ENCODE measurements at regions of chr2 and their contacts with region 1.

Region 1: GRCh38 chr2:241355983-241356870 is at the start of gene FARP2:
- DNase-seq: peak; percentile 95 to 100 (median 97)
- ATAC-seq: peak; percentile 94
- H3K4me3 ChIP-seq: peak within 1 kb of the TSS; percentile 55
- H3K4me3 Mint-ChIP-seq: peak within 1 kb of the TSS; percentile 86
- H3K27ac ChIP-seq: peak within 1 kb of the TSS in 1 of 2 donors; percentile 20
- H3K27ac Mint-ChIP-seq: peak within 1 kb of the TSS; percentile 77
- H3K4me1 ChIP-seq: peaks cover 20% of the 10 kb centered on the region
- H3K4me1 Mint-ChIP-seq: peaks cover 28% of the 10 kb centered on the region
- H3K27me3 ChIP-seq: no peaks in the 10 kb centered on the region
- H3K27me3 Mint-ChIP-seq: no peaks in the 10 kb centered on the region
- CTCF ChIP-seq: no peak
- total RNA-seq, gene FARP2: 17.2 to 18.3 TPM

Region 2: GRCh38 chr2:240832205-240832727 is 524.0 kb before region 1 on chr2:
- CTCF ChIA-PET with region 1: no interaction called
- POLR2A ChIA-PET with region 1: no interaction called
- intact Hi-C with region 1: loop called in 1 of 2 experiments (anchors 5 kb)
- DNase-seq: peak; percentile 98 to 100 (median 99)
- ATAC-seq: peak; percentile 91
- H3K4me3 ChIP-seq: peak overlapping the region; percentile 43
- H3K4me3 Mint-ChIP-seq: peak overlapping the region; percentile 38
- H3K27ac ChIP-seq: no peak overlapping the region
- H3K27ac Mint-ChIP-seq: no peak overlapping the region
- H3K4me1 ChIP-seq: peaks cover 14% of the 10 kb centered on the region
- H3K4me1 Mint-ChIP-seq: no peaks in the 10 kb centered on the region
- H3K27me3 ChIP-seq: peaks cover 17 to 26% of the 10 kb centered on the region in 2 experiments
- H3K27me3 Mint-ChIP-seq: peaks cover 36% of the 10 kb centered on the region
- CTCF ChIP-seq: no peak

Region 3: GRCh38 chr2:241508240-241509154 is 152.3 kb after region 1 on chr2 and contains the start of gene STK25:
- CTCF ChIA-PET with region 1: no interaction called
- POLR2A ChIA-PET with region 1: no interaction called
- intact Hi-C with region 1: loop called in 1 of 2 experiments (anchors 2 kb)
- DNase-seq: peak; percentile 94 to 99 (median 98)
- ATAC-seq: peak; percentile 95
- H3K4me3 ChIP-seq: peak within 1 kb of the TSS; percentile 63
- H3K4me3 Mint-ChIP-seq: peak within 1 kb of the TSS; percentile 94
- H3K27ac ChIP-seq: peak within 1 kb of the TSS; percentile 18 to 77
- H3K27ac Mint-ChIP-seq: peak within 1 kb of the TSS; percentile 78
- H3K4me1 ChIP-seq: peaks cover 30% of the 10 kb centered on the region
- H3K4me1 Mint-ChIP-seq: peaks cover 15% of the 10 kb centered on the region
- H3K27me3 ChIP-seq: no peaks in the 10 kb centered on the region
- H3K27me3 Mint-ChIP-seq: no peaks in the 10 kb centered on the region
- CTCF ChIP-seq: no peak
- total RNA-seq, gene STK25: 76.1 to 81.3 TPM

Region 4: DNA sequence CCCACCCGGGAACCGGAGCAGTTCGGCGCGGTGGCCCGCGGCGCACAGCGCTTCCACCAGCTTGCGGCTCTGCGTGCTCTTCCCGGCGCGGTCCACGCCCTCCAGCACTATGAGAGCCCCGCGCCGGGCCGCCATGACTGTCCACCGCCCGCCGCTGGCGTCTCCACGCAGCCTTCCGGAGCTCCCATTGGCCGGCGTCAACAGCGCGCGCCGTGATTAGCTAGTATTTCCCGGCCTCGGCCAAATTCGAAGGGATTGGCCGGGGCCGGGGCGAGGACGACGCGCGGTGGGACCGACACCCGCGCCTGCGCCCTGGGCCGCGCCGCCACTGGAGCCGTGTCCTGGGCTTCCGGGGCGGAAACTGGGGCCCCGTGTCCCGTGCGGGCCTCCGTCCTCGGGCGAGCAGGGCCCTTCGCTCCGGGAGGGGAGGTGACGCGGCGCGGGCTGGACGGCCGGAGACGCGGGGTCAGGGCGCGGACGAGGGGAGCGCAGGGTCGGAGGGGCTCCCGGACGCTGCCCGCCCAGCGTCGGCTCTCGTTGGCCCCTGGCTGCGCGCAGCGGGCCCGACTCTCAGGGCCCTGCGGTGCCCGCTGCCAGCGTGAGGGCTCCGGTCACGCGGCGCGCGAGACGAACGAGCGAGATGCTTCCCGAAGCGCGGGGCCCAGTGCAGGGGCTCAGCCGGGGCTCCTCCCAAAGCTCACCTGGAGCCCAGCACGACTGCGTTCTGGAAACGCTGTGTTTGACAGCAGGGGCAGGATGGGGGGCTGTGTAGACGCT is 330.6 kb after region 1 on chr2 and contains the start of gene DTYMK:
- CTCF ChIA-PET with region 1: no interaction called
- POLR2A ChIA-PET with region 1: no interaction called
- intact Hi-C with region 1: loop called in 1 of 2 experiments (anchors 5 kb)
- DNase-seq: peak; percentile 89 to 98 (median 95)
- ATAC-seq: peak; percentile 90
- H3K4me3 ChIP-seq: peak within 1 kb of the TSS; percentile 84
- H3K4me3 Mint-ChIP-seq: peak within 1 kb of the TSS; percentile 95
- H3K27ac ChIP-seq: peak within 1 kb of the TSS; percentile 60 to 85
- H3K27ac Mint-ChIP-seq: peak within 1 kb of the TSS; percentile 84
- H3K4me1 ChIP-seq: peaks cover 37% of the 10 kb centered on the region
- H3K4me1 Mint-ChIP-seq: peaks cover 38% of the 10 kb centered on the region
- H3K27me3 ChIP-seq: no peaks in the 10 kb centered on the region
- H3K27me3 Mint-ChIP-seq: no peaks in the 10 kb centered on the region
- CTCF ChIP-seq: no peak
- total RNA-seq, gene DTYMK: 4.8 to 6.0 TPM